ENCODE measurements at regions of chr19 and their contacts with region 1.

Region 1: GRCh38 chr19:6372594-6373095 is at the start of gene ALKBH7:
- DNase-seq: peak; percentile 92

Region 2: GRCh38 chr19:6273701-6274601 is 98.7 kb before region 1 on chr19:
- CTCF ChIA-PET with region 1: no interaction called
- POLR2A ChIA-PET with region 1: no interaction called
- DNase-seq: peak; percentile 24

Region 3: DNA sequence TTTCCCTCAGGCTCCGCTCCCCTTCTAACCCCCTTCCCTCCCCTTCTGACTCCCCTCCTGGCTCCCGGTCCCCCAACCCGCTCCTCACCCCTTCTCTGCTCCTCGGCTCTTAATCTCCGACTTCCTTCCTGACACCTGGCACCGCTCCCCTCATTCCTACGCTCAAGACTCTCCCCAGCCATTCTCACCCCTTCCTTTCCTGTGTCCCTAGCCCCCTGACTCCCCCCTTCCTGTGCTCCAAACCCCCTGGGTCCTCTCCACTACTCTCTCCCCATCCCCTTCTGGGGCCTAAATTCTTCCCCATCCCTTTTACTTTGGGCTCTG is 10.7 kb before region 1 on chr19:
- CTCF ChIA-PET with region 1: no interaction called
- POLR2A ChIA-PET with region 1: interaction called, 50 read pairs
- DNase-seq: no peak

Region 4: DNA sequence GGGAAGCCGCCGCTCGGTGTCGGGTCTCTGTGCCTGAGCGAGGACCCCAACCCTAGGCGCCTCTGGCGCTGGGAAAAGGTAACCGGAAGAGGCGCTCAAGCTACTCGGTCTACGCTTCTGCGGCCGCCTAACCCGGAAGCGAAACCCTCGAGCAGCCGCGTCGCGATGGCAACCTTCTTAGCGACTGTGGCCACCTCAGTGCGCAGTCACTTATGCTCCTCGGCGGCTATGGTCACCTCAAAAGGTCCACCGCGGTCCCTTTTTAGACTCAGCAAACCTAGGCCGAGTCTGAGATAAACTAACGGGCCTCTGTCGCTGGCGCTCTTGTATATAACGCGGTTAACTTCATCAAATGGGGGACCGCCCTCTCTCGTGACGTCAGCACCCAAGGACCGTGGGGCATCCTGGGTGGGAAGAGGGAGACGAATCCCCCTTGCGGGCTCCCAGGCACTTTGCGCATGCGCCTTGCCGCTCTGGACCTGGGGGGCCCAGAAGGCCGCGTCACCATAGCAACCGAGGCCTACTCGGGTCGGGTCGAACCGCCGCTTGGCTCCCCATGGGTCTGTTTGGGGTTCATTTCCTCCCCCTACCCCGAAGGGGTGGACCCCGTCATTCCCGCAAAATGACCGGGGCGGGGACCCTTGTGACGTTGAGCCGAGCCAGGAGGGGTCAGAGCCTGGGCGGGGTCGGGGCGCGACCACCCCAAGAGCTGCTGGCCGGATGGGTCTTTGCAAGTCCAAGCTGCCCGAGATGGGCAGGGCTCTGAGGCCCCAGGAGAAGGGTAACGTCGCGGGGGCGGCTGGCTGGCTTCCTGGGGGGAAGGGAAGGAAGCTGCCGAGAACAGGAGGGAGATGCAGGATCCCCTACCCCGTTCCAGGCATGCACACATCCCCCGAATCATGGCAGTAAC is 20.7 kb after region 1 on chr19 and contains the start of gene GTF2F1:
- CTCF ChIA-PET with region 1: no interaction called
- POLR2A ChIA-PET with region 1: interaction called, 20 read pairs
- DNase-seq: peak; percentile 99

Region 5: DNA sequence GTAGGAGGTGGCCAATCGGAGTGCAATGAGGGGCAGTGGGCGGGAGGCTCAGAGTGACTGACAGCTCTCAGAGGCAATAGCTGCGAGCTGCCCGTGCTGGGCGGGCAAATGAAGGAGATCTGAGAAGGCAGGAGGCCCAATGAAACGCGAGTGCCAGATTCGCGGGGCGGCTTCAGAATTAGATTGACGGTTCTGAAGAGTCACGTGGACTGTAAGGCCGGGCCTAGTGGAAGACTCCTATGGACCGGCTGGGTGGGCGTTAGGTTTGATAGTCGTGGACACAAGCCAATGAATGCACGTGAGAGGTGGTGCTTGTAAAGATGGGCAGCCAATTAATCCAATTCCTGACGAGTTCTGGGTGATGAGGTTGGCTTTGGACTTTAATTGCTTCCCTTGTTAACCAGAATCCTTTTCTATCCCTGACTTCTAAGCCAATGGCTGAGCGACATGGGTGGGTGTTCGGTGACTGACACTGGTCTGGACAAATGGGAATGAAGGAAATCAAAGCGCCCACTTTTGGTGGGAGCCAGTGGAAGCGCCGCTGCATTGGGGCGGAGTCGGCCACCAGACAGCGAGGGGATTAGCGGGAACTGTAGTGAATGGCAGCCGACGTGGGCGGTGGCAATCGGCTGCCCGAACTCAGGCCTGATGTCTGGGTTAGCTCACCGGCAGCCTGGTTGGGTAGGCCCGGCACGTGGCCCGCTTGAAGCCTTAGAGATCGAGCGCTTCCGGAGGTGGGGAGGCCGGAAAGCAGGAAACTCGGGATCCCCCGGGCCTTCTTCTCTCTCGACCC is 52.5 kb after region 1 on chr19:
- CTCF ChIA-PET with region 1: no interaction called
- POLR2A ChIA-PET with region 1: interaction called, 14 read pairs
- DNase-seq: peak; percentile 95

Region 6: DNA sequence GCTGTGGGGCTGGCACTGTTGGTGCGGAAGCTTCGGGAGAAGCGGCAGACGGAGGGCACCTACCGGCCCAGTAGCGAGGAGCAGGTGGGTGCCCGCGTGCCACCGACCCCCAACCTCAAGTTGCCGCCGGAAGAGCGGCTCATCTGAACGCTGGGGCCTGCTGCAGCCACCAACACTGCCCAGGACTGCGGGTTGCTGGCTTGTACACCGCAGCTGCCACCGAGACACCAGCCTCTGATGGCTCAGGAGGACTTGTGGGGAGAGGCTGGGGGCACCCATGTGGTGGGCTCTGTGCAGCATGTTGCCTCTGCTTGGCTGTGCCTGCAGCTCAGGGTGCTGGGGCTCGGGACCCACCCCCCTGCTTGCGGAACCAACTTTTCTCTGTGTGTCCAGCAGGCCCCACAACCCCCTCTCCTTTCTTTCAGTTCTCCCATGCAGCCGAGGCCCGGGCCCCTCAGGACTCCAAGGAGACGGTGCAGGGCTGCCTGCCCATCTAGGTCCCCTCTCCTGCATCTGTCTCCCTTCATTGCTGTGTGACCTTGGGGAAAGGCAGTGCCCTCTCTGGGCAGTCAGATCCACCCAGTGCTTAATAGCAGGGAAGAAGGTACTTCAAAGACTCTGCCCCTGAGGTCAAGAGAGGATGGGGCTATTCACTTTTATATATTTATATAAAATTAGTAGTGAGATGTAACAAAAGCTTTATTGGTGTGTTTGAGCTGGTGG is 94.0 kb after region 1 on chr19:
- CTCF ChIA-PET with region 1: no interaction called
- POLR2A ChIA-PET with region 1: no interaction called
- DNase-seq: no peak